H1 (cell line): ENCODE measurements at regions of chr1 and their contacts with region 1.

Region 1: GRCh38 chr1:16199157-16199501 is 13.3 kb downstream of the ARHGEF19 start:
- DNase-seq: no peak
- H3K4me3 ChIP-seq: no peak overlapping the region
- H3K27ac ChIP-seq: no peak overlapping the region
- H3K4me1 ChIP-seq: no peaks in the 10 kb centered on the region
- H3K27me3 ChIP-seq: no peaks in the 10 kb centered on the region
- CTCF ChIP-seq: no peak
- EP300 ChIP-seq: no peak
- POLR2A ChIP-seq: no peak
- RAD21 ChIP-seq: no peak

Region 2: GRCh38 chr1:16187748-16188401 is 11.3 kb before region 1 on chr1:
- CTCF ChIA-PET with region 1: interaction called, 45 read pairs
- POLR2A ChIA-PET with region 1: interaction called, 10 read pairs
- DNase-seq: peak in 1 of 2 experiments; percentile 95
- H3K4me3 ChIP-seq: no peak overlapping the region
- H3K27ac ChIP-seq: no peak overlapping the region
- H3K4me1 ChIP-seq: no peaks in the 10 kb centered on the region
- H3K27me3 ChIP-seq: no peaks in the 10 kb centered on the region; a peak in 1 of 7 replicates
- CTCF ChIP-seq: peak; percentile 92 to 98 (median 95)
- EP300 ChIP-seq: no peak
- POLR2A ChIP-seq: no peak
- RAD21 ChIP-seq: peak; percentile 100

Region 3: DNA sequence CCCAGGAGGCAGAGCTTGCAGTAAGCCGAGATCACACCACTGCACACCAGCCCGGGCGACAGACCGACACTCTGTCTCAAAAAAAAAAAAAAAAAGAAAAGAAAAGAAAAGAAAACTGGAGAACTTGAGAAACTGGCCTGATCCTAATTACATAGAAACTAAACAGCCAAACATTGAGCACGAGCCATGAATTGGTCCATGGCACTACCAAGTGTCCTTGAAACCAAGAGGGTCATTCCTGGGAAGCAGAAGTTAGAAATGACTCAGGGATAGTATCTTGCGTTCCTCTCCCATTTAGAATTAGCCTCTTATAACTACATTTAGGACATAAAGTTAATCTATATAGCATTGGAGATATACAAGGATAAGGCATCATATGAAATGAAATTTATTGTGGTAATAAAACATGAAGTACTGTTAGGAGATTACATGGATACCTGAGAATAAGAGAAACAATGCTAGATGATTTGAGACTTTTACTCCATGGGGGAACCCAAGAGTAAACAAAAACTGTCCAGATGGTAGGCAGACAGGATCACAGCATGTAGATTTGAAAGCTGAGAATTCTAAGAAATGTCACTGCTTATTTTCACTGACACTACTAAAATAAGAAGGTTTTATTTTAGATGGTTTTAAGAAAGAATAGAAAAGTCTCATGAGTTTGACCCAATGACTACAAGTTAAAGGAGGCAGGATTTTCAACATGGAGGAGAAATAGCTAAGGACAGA is 77.3 kb after region 1 on chr1:
- CTCF ChIA-PET with region 1: no interaction called
- POLR2A ChIA-PET with region 1: no interaction called
- DNase-seq: no peak
- H3K4me3 ChIP-seq: no peak overlapping the region
- H3K27ac ChIP-seq: no peak overlapping the region
- H3K4me1 ChIP-seq: no peaks in the 10 kb centered on the region
- H3K27me3 ChIP-seq: no peaks in the 10 kb centered on the region
- CTCF ChIP-seq: no peak
- EP300 ChIP-seq: no peak
- POLR2A ChIP-seq: no peak
- RAD21 ChIP-seq: no peak

Region 4: DNA sequence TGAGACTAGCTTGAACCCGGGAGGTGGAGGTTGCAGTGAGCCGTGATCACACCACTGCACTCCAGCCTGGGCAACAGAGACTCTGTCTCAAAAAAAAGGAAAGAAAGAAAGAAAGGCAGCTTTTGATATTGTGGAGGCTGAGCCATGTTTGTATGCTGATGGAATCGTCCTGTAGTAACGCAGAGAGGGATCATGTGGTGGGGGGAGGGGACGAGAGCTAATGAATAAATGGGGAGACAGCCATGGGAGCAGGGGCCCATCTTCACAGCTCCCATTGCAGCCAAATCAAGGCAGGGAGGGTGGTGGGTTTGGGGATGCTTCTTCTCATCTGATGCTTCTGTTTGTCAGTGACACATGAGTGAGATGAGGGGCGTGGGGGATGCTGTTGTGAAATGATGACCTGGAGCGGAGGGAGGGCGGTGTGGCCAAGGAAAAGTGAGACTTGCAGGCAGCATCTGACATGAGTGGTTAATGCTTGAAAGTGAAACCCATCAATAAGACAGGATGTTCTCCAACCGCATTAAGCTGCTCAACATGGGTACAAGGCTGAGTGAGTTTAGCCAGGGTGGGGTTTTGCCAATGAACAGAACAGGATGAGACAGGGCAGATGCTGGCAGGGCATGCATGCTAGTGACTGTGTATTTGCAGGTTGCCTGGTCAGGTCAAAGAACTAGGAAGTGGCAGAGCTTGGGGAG is 221.4 kb after region 1 on chr1:
- CTCF ChIA-PET with region 1: no interaction called
- POLR2A ChIA-PET with region 1: no interaction called
- DNase-seq: no peak
- H3K4me3 ChIP-seq: no peak overlapping the region
- H3K27ac ChIP-seq: no peak overlapping the region
- H3K4me1 ChIP-seq: no peaks in the 10 kb centered on the region
- H3K27me3 ChIP-seq: 0 out of 7 replicates have a peak, but pooled peaks cover 0 to 2% (median 0%) of the 10 kb centered on the region in 4 experiments
- CTCF ChIP-seq: no peak
- EP300 ChIP-seq: no peak
- POLR2A ChIP-seq: no peak
- RAD21 ChIP-seq: no peak